Activated T-helper 2 cell treated with anti-CD3 and anti-CD28 coated beads, Interferon-gamma antibody, Interleukin-2, Interleukin-4, amounts not matched to agents 10 μg/mL and 5 μg/mL and 100 μg/mL, durations not matched to agents 14 hours and 24 hours and 36 hours (primary cell): ENCODE measurements at regions of chr1 and their contacts with region 1.

Region 1: GRCh38 chr1:228457396-228458176 is 29.6 kb upstream of the RNF187 start:
- DNase-seq: peak; percentile 89
- H3K4me3 Mint-ChIP-seq: peak overlapping the region; percentile 98
- H3K27ac Mint-ChIP-seq: peak overlapping the region; percentile 99
- H3K4me1 Mint-ChIP-seq: peaks cover 42% of the 10 kb centered on the region
- H3K27me3 Mint-ChIP-seq: no peaks in the 10 kb centered on the region

Region 2: DNA sequence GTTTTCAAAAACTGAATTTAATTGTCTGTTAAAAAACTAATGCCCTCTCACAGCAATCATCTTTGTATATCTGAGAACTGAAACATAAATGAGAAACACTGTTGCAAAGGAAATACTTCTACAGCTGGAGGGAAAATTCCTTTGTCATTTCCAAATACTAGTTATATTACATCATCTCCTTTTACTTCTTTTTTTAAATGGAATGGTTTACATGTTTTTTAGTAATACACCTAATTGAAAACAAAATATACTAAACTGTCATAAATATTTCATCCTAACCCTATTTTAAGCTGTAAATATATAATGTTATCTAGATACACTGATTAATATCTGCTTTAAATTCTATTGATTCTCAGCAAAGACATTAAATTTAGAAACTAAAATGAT is 1158.4 kb before region 1 on chr1:
- intact Hi-C with region 1: no loop called
- DNase-seq: no peak
- H3K4me3 Mint-ChIP-seq: no peak overlapping the region
- H3K27ac Mint-ChIP-seq: no peak overlapping the region
- H3K4me1 Mint-ChIP-seq: peaks cover 4% of the 10 kb centered on the region
- H3K27me3 Mint-ChIP-seq: peaks cover 7% of the 10 kb centered on the region

Region 3: DNA sequence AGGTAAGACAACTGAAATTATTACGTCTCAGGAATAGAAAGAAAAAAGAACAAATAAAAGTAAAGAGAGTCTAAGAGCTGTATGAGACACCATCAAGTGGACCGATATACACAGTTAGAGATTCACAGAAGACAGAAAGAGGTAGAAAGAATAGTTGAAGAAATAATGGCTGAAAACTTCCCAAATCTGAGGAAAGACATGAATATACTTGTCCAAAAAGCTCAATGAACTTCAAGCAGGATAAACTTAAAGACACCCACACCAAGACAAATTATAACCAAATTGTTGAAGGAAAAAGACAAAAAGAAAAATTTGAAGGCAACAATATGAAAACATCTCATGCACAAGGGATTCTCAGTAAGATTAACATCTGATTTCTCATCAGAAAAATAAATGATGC is 470.4 kb before region 1 on chr1:
- intact Hi-C with region 1: no loop called
- DNase-seq: no peak
- H3K4me3 Mint-ChIP-seq: no peak overlapping the region
- H3K27ac Mint-ChIP-seq: no peak overlapping the region
- H3K4me1 Mint-ChIP-seq: no peaks in the 10 kb centered on the region
- H3K27me3 Mint-ChIP-seq: peaks cover 22% of the 10 kb centered on the region

Region 4: DNA sequence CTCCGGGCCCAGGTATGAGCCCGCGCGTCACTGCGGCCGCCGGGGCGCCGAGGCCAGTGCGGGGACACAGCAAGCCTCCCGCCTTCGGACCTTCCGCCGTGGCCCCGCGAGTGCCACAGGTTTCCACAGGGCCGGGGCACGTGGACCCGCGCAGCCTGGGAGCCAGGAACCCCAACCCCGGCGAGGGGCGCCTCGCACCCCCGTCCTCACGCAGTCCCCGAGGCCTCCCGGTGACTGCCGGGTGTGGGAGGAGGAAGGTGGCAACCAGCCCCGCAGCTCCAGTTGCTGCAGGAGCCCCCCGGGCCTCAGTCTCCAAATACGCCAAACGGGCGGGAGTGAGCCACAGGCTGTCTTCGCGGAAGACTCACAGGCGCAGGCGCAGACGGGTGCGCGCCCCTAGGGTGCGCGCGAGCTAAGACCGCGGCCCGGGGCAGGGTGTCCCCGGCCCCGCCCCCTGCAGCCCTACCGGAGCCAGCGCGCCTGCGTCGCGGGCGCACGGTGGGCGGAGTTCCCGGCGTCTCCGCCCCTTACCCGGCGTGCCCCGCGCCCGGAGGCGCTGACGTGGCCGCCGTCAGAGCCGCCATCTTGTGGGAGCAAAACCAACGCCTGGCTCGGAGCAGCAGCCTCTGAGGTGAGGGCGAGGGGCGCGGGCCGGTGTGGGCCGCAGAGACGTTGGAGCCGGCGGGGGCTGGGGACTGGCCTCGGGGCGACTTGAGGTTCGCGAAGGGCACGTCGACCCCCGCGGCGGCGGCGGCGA is 375.3 kb before region 1 on chr1 and contains the start of gene ARF1:
- intact Hi-C with region 1: loop called (anchors 5 kb)
- DNase-seq: peak; percentile 89
- H3K4me3 Mint-ChIP-seq: peak within 1 kb of the TSS; percentile 89
- H3K27ac Mint-ChIP-seq: peak within 1 kb of the TSS; percentile 92
- H3K4me1 Mint-ChIP-seq: peaks cover 42% of the 10 kb centered on the region
- H3K27me3 Mint-ChIP-seq: no peaks in the 10 kb centered on the region
- total RNA-seq, gene ARF1: 409 and 410 TPM in 2 replicates

Region 5: DNA sequence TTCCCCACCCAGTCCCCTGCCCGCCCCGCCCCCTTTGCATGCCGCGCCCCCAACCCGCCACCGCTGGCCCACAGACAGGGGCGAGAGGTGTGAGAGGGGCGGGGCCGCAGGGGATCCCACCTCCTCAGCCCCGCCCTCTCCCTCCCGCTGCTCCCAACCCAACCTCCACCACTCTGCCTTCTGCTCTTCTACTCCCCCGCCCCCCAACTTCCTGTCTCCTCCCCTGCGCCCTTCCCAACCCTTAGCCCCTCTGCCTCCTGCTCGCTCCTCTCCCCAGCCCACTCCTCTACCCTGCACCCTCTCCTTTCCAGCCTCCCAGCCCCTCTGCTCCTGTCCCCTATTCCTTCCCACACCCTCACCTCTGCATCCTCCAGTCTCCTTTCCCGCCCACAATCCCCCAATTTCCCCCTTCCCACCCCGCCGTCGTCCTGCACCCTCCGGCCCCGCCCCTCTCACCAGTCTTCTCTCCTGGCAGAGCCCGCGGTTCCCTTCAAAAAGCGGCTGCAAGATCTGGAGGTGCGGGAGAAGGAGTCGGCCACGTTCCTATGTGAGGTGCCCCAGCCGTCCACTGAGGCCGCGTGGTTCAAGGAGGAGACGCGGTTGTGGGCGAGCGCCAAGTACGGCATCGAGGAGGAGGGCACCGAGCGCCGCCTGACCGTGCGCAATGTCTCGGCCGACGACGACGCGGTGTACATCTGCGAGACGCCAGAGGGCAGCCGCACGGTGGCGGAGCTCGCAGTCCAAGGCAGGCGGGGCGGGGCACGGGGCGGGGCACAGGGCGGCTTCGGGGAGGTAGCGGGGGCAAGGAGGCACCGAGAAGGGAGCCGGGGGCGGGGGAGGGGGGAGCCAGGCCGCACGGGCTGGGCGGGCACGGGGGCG is 244.4 kb before region 1 on chr1:
- intact Hi-C with region 1: loop called (anchors 2 kb)
- DNase-seq: peak; percentile 82
- H3K4me3 Mint-ChIP-seq: peak overlapping the region; percentile 89
- H3K27ac Mint-ChIP-seq: peak overlapping the region; percentile 93
- H3K4me1 Mint-ChIP-seq: peaks cover 4% of the 10 kb centered on the region
- H3K27me3 Mint-ChIP-seq: no peaks in the 10 kb centered on the region

Region 6: DNA sequence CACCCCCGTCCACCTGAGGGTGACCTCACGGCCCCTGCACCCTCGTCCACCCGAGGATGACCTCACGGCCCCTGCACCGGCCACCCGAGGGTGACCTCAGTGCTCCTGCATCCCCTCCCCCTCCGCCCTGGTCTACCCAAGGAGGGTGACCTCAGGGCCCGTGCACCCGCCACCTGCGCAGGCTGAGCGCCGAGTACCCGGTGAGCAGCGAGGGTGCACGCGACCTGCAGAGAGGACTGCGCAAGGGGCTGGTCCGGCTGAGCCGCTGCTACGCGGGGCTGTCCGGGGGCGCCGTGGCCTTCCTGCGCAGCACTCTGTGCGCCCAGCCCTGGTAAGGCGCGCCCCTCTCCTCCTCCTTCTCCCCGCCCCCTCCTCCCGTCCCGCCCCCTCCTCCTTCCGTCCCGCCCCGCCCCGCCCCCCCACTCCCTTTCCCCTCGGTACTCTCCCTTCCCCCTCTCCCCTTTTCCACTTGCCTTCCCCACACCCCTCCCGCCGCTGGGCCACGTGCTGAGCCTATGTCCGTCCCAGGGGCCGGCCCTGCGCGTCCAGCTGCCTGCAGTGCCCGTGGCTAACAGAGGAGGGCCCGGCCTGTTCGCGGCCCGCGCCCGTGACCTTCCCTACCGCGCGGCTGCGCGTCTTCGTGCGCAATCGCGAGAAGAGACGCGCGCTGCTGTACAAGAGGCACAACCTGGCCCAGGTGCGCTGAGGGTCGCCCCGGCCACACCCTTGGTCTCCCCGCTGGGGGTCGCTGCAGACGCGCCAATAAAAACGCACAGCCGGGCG is 79.3 kb before region 1 on chr1:
- intact Hi-C with region 1: loop called (anchors 2 kb)
- DNase-seq: peak; percentile 47
- H3K4me3 Mint-ChIP-seq: peak overlapping the region; percentile 81
- H3K27ac Mint-ChIP-seq: no peak overlapping the region
- H3K4me1 Mint-ChIP-seq: peaks cover 6% of the 10 kb centered on the region
- H3K27me3 Mint-ChIP-seq: peaks cover 33% of the 10 kb centered on the region

Region 7: GRCh38 chr1:228405987-228406265 is 51.7 kb before region 1 on chr1:
- intact Hi-C with region 1: loop called (anchors 2 kb)
- DNase-seq: no peak
- H3K4me3 Mint-ChIP-seq: peak overlapping the region; percentile 97
- H3K27ac Mint-ChIP-seq: peak overlapping the region; percentile 92
- H3K4me1 Mint-ChIP-seq: peaks cover 41% of the 10 kb centered on the region
- H3K27me3 Mint-ChIP-seq: no peaks in the 10 kb centered on the region

Region 8: GRCh38 chr1:228486596-228487335 is 29.2 kb after region 1 on chr1:
- intact Hi-C with region 1: no loop called
- DNase-seq: peak; percentile 83
- H3K4me3 Mint-ChIP-seq: peak overlapping the region; percentile 97
- H3K27ac Mint-ChIP-seq: peak overlapping the region; percentile 100
- H3K4me1 Mint-ChIP-seq: peaks cover 35% of the 10 kb centered on the region
- H3K27me3 Mint-ChIP-seq: no peaks in the 10 kb centered on the region